GM12878 (cell line): ENCODE measurements at regions of chr1 and their contacts with region 1.

Region 1: GRCh38 chr1:111507411-111508201 is 4.2 kb upstream of the ADORA3 start:
- DNase-seq: peak; percentile 82
- ATAC-seq: peak; percentile 79
- H3K4me3 ChIP-seq: peak overlapping the region; percentile 69
- H3K27ac ChIP-seq: peak overlapping the region; percentile 99
- H3K4me1 ChIP-seq: peaks cover 58% of the 10 kb centered on the region
- H3K27me3 ChIP-seq: no peaks in the 10 kb centered on the region
- CTCF ChIP-seq: peak in 2 of 3 experiments; percentile 15 to 32; a peak in 1 of 6 replicates
- EP300 ChIP-seq: peak in 1 of 2 experiments; percentile 73; a peak in 2 of 4 replicates
- POLR2A ChIP-seq: peak; percentile 62
- RAD21 ChIP-seq: no peak

Region 2: GRCh38 chr1:111448918-111449702 is 58.5 kb before region 1 on chr1 and contains the starts of genes ATP5PB and WDR77:
- CTCF ChIA-PET with region 1: interaction called, 22 read pairs
- POLR2A ChIA-PET with region 1: interaction called, 5 read pairs
- RAD21 ChIA-PET with region 1: interaction called, 18 read pairs
- SMC1A ChIA-PET with region 1: interaction called, 11 read pairs
- in situ Hi-C with region 1: no loop called
- intact Hi-C with region 1: loop called (anchors 5 kb)
- DNase-seq: peak; percentile 98
- ATAC-seq: peak; percentile 91
- H3K4me3 ChIP-seq: peak within 1 kb of the TSS; percentile 98
- H3K27ac ChIP-seq: peak within 1 kb of the TSS; percentile 95
- H3K4me1 ChIP-seq: peaks cover 24% of the 10 kb centered on the region
- H3K27me3 ChIP-seq: no peaks in the 10 kb centered on the region
- CTCF ChIP-seq: no peak
- EP300 ChIP-seq: no peak
- POLR2A ChIP-seq: peak; percentile 79
- RAD21 ChIP-seq: no peak
- polyA plus RNA-seq, gene ATP5PB: 1,250 to 1,760 TPM
- polyA plus RNA-seq, gene WDR77: 12.7 to 34.1 TPM

Region 3: DNA sequence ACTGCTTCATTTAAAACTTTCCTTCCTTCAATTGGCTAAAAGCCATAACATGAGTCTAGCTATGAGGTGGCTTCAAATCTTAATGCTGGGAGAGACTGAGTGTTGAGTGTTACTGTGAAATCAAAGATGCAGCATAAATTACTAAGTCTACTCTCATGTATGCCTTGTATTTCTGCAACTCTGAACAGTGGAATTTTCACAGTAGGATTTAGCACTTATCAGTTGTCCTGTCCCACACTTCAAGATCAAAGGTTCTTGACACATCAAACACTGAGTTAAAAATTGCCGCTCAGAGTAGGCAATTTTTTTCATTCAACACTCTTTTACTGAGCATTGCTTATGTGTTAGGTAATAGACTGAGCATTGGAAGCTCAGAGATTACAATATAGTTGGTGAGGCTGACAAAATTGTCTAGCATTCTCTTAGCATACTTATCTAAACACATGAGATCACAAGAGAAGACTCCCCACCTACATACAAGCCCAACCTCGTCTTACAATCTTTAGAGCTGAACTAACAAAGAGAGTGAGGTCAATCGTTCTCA is 52.2 kb after region 1 on chr1:
- CTCF ChIA-PET with region 1: interaction called, 7 read pairs
- POLR2A ChIA-PET with region 1: no interaction called
- RAD21 ChIA-PET with region 1: interaction called, 10 read pairs
- SMC1A ChIA-PET with region 1: interaction called, 22 read pairs
- in situ Hi-C with region 1: no loop called
- intact Hi-C with region 1: no loop called
- DNase-seq: no peak
- ATAC-seq: no peak
- H3K4me3 ChIP-seq: no peak overlapping the region
- H3K27ac ChIP-seq: no peak overlapping the region
- H3K4me1 ChIP-seq: no peaks in the 10 kb centered on the region
- H3K27me3 ChIP-seq: no peaks in the 10 kb centered on the region
- CTCF ChIP-seq: no peak
- EP300 ChIP-seq: no peak
- POLR2A ChIP-seq: no peak
- RAD21 ChIP-seq: no peak

Region 4: GRCh38 chr1:111628153-111628552 is 120.5 kb after region 1 on chr1:
- CTCF ChIA-PET with region 1: interaction called, 38 read pairs
- POLR2A ChIA-PET with region 1: interaction called, 9 read pairs
- RAD21 ChIA-PET with region 1: interaction called, 98 read pairs
- SMC1A ChIA-PET with region 1: interaction called, 94 read pairs
- in situ Hi-C with region 1: no loop called
- intact Hi-C with region 1: loop called (anchors 2 kb)
- DNase-seq: no peak
- ATAC-seq: no peak
- H3K4me3 ChIP-seq: peak overlapping the region; percentile 36
- H3K27ac ChIP-seq: peak overlapping the region; percentile 53
- H3K4me1 ChIP-seq: peaks cover 26% of the 10 kb centered on the region; the same call in 1 of the 2 replicates
- H3K27me3 ChIP-seq: no peaks in the 10 kb centered on the region
- CTCF ChIP-seq: no peak
- EP300 ChIP-seq: no peak
- POLR2A ChIP-seq: no peak
- RAD21 ChIP-seq: no peak

Region 5: DNA sequence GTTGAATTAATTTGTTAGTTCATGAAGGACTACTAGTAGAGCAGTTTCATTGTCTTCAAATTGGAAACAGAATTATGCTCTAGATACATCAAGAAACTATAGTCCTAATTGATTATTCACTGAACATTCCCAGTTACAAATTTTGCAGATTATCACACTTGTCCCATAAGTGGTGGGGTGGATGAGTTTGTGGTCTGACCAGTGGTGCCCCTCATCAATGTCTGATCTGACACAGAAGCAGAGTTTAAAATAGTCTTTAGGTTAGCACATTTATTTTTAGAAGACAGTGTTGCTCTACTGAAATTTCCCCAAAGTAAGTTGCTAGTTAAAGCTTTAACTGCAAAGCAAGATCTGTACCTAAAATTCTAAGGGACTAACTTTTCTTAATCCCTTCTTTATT is 188.7 kb after region 1 on chr1:
- CTCF ChIA-PET with region 1: interaction called, 23 read pairs
- POLR2A ChIA-PET with region 1: interaction called, 7 read pairs
- RAD21 ChIA-PET with region 1: interaction called, 50 read pairs
- SMC1A ChIA-PET with region 1: interaction called, 41 read pairs
- in situ Hi-C with region 1: no loop called
- intact Hi-C with region 1: loop called (anchors 5 kb)
- DNase-seq: peak; percentile 20
- ATAC-seq: peak; percentile 70
- H3K4me3 ChIP-seq: peak overlapping the region; percentile 28; the same call in 1 of the 2 replicates
- H3K27ac ChIP-seq: peak overlapping the region; percentile 35; the same call in 1 of the 2 replicates
- H3K4me1 ChIP-seq: peaks cover 25% of the 10 kb centered on the region
- H3K27me3 ChIP-seq: no peaks in the 10 kb centered on the region
- CTCF ChIP-seq: no peak
- EP300 ChIP-seq: peak; percentile 38 to 64; a peak in 1 of 4 replicates
- POLR2A ChIP-seq: no peak
- RAD21 ChIP-seq: no peak

Region 6: GRCh38 chr1:111747282-111747734 is 239.7 kb after region 1 on chr1:
- CTCF ChIA-PET with region 1: interaction called, 109 read pairs
- POLR2A ChIA-PET with region 1: interaction called, 8 read pairs
- RAD21 ChIA-PET with region 1: interaction called, 68 read pairs
- SMC1A ChIA-PET with region 1: interaction called, 123 read pairs
- in situ Hi-C with region 1: loop called (anchors 10 kb)
- intact Hi-C with region 1: loop called (anchors 2 kb)
- DNase-seq: no peak
- ATAC-seq: peak; percentile 94
- H3K4me3 ChIP-seq: no peak overlapping the region
- H3K27ac ChIP-seq: no peak overlapping the region
- H3K4me1 ChIP-seq: no peaks in the 10 kb centered on the region; the same call in 1 of the 2 replicates
- H3K27me3 ChIP-seq: peaks cover 0 to 1% of the 10 kb centered on the region in 2 experiments; a peak in 1 of 4 replicates
- CTCF ChIP-seq: peak; percentile 63 to 88 (median 65)
- EP300 ChIP-seq: no peak
- POLR2A ChIP-seq: no peak
- RAD21 ChIP-seq: peak; percentile 62